Pancreas (tissue), 10 donors: ENCODE measurements at regions of chr1 and their contacts with region 1.

Region 1: DNA sequence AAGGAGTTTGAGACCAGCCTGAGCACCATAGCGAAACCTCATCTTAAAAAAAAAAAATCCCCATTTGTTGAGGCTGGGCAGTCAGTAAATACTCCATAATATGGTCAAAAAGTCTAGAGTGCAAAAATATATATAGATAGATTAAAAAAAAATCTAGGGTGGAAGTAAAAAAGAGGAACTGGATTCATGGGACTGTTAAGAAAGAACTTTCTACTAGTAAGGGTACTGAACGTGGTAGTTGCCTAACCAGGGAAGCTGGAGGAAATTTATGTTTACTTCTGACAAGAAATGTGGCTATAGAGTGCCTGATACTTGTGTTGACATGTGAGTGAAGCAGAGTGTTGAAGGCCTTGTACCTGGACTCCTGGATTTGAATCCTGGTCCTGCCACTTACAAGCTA is 265.9 kb upstream of the FAM78B start:
- DNase-seq: no peak
- ATAC-seq: no peak
- H3K4me3 ChIP-seq: no peak overlapping the region
- H3K27ac ChIP-seq: no peak overlapping the region
- H3K4me1 ChIP-seq: no peaks in the 10 kb centered on the region
- H3K27me3 ChIP-seq: no peaks in the 10 kb centered on the region
- CTCF ChIP-seq: no peak

Region 2: GRCh38 chr1:165928075-165928731 is 504.5 kb before region 1 on chr1:
- intact Hi-C with region 1: loop called in 2 of 3 experiments (anchors 5 to 10 kb)
- DNase-seq: peak in 1 of 6 donors; percentile 35
- ATAC-seq: peak in 3 of 4 donors; percentile 59 to 66 (median 61)
- H3K4me3 ChIP-seq: no peak overlapping the region
- H3K27ac ChIP-seq: no peak overlapping the region
- H3K4me1 ChIP-seq: no peaks in the 10 kb centered on the region
- H3K27me3 ChIP-seq: no peaks in the 10 kb centered on the region
- CTCF ChIP-seq: peak in 3 of 4 donors; percentile 28 to 47 (median 35)

Region 3: GRCh38 chr1:165933446-165934178 is 499.0 kb before region 1 on chr1:
- intact Hi-C with region 1: loop called in 2 of 3 experiments (anchors 5 to 10 kb)
- DNase-seq: no peak
- ATAC-seq: no peak
- H3K4me3 ChIP-seq: no peak overlapping the region
- H3K27ac ChIP-seq: no peak overlapping the region
- H3K4me1 ChIP-seq: no peaks in the 10 kb centered on the region
- H3K27me3 ChIP-seq: no peaks in the 10 kb centered on the region
- CTCF ChIP-seq: no peak

Region 4: GRCh38 chr1:166145499-166145898 is 287.2 kb before region 1 on chr1:
- intact Hi-C with region 1: loop called in 1 of 3 experiments (anchors 10 kb)
- DNase-seq: no peak
- ATAC-seq: peak in 2 of 4 donors; percentile 54 to 58
- H3K4me3 ChIP-seq: no peak overlapping the region
- H3K27ac ChIP-seq: no peak overlapping the region
- H3K4me1 ChIP-seq: no peaks in the 10 kb centered on the region
- H3K27me3 ChIP-seq: no peaks in the 10 kb centered on the region
- CTCF ChIP-seq: no peak